ENCODE measurements at regions of chr12 and their contacts with region 1.

Region 1: DNA sequence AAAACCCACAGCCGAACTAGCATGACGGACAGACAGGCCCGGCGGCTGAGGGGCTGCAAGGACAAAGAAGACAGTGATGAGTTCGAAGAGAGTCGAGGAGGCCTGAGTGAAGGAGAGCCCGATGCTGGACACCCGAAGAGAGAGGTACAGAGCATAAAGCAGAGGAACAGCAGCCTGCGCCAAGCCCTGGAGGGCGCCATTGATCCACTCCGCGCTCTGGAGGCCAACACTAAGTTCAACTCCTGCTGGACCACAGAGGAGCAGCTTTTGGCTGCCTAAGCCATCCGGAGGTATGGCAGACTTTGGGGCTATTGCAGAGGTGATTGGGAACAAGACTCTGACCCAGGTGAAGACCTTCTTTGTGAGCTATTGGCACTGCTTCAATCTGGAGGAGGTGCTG is 7.8 kb upstream of the PLXNC1 start:
- DNase-seq: no peak
- H3K4me3 ChIP-seq: no peak overlapping the region
- H3K27ac ChIP-seq: no peak overlapping the region
- H3K4me1 ChIP-seq: peaks cover 3% of the 10 kb centered on the region
- H3K27me3 ChIP-seq: no peaks in the 10 kb centered on the region
- CTCF ChIP-seq: peak; percentile 18

Region 2: GRCh38 chr12:93918262-93918661 is 222.3 kb before region 1 on chr12:
- intact Hi-C with region 1: no loop called
- DNase-seq: no peak
- H3K4me3 ChIP-seq: no peak overlapping the region
- H3K27ac ChIP-seq: no peak overlapping the region
- H3K4me1 ChIP-seq: peaks cover 8% of the 10 kb centered on the region
- H3K27me3 ChIP-seq: no peaks in the 10 kb centered on the region
- CTCF ChIP-seq: no peak

Region 3: DNA sequence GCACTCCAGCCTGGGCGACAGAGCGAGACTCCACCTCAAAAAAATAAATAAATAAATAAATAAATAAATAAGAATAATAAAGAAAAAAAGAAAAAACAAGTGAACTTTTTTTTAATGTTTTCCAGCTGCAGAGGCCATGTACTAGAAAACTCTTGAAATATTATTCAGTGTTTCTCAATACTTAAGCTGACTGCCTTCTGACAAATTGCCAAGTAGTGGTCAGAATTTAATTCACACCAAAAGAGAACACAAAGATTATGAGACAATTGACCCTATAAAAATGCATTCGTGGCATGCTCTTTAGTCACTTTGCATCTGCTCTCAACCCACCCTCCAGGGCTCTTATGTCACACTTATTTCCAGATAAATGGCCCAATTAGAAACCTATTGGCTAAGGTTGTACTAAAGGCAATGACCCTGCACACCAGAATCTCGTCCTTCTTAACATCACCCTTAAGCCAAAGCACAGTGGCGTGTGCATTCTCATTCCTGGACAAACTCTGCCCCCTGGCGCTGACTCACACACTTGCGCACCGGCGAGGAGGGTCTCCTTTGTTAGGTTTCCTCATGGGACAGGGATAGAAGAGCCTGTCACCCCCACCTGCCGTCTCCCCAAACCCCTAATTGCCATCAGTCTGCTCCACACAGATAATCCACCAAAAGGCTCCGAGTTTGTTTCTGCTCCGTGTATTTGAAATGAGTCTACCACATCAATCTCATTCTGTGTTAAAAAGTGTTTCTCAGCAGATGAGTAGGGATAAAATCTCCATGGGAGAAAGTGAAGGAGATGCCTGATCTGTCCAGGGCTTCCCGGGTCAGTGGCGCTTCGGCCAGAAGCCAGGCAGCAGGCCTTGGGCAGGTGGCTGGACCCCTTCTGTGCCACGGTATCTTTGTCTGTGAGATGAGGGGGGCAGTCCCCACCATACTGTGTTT is 392.2 kb after region 1 on chr12:
- intact Hi-C with region 1: loop called (anchors 5 kb)
- DNase-seq: peak; percentile 60
- H3K4me3 ChIP-seq: no peak overlapping the region
- H3K27ac ChIP-seq: no peak overlapping the region
- H3K4me1 ChIP-seq: no peaks in the 10 kb centered on the region
- H3K27me3 ChIP-seq: no peaks in the 10 kb centered on the region
- CTCF ChIP-seq: peak; percentile 86